ENCODE measurements at regions of chr5 and their contacts with region 1.

Region 1: DNA sequence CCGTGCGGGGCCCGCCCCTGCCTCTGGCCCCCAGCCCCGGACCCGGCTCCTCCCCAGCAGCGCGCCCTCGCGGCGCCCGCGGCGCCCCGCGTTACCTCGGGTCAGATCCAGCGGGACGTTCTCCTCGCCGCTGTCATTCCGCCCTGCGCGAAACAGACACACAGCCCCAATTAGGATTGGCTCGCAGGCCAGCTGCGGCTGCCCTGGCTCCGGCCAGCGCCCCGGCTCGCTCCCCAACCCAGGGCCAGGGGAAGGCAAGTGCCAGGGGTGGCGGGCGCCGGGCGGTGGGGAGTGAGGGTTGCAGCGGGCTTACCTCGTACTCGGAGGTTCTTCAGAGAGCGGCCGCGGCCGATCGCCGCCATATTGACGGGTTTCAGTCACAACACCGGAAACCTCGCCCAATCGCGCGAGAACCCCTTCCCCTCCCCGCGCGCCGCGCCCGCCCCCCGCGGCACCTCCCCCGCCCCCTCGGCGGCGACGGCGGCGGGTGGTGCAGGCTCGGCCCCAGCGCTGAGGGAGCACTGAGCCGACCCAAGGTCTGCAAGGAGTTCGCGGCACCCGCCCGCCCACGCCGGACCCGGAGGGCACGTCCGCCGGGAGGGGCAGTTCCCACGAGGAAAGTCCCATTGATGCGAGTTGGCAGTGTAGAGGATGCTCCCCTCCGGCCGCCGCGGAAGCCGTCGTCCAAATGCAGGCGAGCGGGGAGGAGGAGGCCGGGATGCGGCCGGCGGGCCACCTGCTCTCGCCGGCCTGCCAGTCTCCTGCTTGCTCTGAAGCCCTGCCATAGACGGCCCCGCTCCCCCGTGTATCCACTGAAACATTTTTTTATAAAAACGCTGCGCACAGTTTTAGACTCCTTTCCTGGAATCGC is at the start of gene RICTOR:
- DNase-seq: peak; percentile 93
- ATAC-seq: peak; percentile 86
- H3K4me3 Mint-ChIP-seq: peak within 1 kb of the TSS; percentile 93
- H3K27ac Mint-ChIP-seq: peak within 1 kb of the TSS; percentile 92
- H3K4me1 Mint-ChIP-seq: peaks cover 31% of the 10 kb centered on the region
- H3K27me3 Mint-ChIP-seq: peaks cover 22% of the 10 kb centered on the region
- CTCF ChIP-seq: no peak
- total RNA-seq, gene RICTOR: 23.9 to 26.1 TPM

Region 2: DNA sequence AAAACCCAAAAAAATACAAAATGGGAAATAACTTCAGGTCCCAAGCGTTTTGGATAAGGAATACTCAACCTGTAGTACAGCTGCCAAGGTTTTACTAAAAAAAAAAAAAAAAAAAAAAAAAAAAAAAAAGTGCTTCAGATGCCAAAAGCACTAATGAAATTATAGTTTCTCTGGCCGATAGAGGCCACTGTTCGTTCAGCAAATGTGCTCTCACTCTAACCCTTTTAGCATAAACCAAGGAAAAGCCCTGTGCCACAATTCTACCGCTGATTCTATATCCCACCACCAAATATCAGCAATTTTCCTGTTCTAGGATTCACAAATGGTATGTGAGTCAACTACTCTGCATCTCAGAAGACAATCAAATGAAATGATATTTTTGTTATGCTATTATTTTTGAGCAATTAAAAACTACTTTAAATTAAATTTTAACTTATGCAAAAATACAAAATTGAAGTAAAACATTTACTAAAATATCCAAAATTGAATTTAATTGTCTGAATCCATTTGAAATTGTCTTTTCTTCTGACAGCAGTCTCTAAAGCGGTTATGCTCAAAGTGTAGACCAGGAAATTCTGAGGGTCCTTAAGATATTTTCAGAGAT is 79.8 kb before region 1 on chr5:
- CTCF ChIA-PET with region 1: interaction called, 3 read pairs
- POLR2A ChIA-PET with region 1: no interaction called
- intact Hi-C with region 1: loop called (anchors 10 kb)
- DNase-seq: peak; percentile 52
- ATAC-seq: peak; percentile 30
- H3K4me3 Mint-ChIP-seq: no peak overlapping the region
- H3K27ac Mint-ChIP-seq: no peak overlapping the region
- H3K4me1 Mint-ChIP-seq: peaks cover 15% of the 10 kb centered on the region
- H3K27me3 Mint-ChIP-seq: no peaks in the 10 kb centered on the region
- CTCF ChIP-seq: peak; percentile 62

Region 3: DNA sequence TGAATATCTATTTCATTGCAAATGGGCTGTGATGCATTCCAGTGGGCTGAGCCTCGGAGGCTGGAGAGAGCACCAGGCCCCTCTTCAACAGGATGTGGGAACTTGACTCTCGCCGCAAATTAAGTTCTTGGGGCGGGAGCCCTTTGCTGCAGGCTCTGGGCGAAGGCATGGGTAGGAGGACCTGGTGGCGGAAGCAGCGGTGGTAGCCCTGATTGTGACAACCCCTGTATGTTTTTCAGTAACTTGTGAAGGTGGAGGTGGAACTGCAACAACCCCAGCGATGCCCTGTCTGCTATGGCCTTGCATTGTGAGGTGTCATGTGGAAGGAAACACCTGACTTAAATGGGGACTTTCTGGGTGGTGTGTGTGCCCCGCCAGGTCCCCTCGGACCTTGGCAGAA is 135.7 kb after region 1 on chr5:
- CTCF ChIA-PET with region 1: no interaction called
- POLR2A ChIA-PET with region 1: no interaction called
- intact Hi-C with region 1: loop called (anchors 10 kb)
- DNase-seq: peak; percentile 91
- ATAC-seq: peak; percentile 74
- H3K4me3 Mint-ChIP-seq: peak overlapping the region; percentile 71
- H3K27ac Mint-ChIP-seq: peak overlapping the region; percentile 94
- H3K4me1 Mint-ChIP-seq: peaks cover 87% of the 10 kb centered on the region
- H3K27me3 Mint-ChIP-seq: no peaks in the 10 kb centered on the region
- CTCF ChIP-seq: no peak